ENCODE measurements at regions of chr22 and their contacts with region 1.

Region 1: DNA sequence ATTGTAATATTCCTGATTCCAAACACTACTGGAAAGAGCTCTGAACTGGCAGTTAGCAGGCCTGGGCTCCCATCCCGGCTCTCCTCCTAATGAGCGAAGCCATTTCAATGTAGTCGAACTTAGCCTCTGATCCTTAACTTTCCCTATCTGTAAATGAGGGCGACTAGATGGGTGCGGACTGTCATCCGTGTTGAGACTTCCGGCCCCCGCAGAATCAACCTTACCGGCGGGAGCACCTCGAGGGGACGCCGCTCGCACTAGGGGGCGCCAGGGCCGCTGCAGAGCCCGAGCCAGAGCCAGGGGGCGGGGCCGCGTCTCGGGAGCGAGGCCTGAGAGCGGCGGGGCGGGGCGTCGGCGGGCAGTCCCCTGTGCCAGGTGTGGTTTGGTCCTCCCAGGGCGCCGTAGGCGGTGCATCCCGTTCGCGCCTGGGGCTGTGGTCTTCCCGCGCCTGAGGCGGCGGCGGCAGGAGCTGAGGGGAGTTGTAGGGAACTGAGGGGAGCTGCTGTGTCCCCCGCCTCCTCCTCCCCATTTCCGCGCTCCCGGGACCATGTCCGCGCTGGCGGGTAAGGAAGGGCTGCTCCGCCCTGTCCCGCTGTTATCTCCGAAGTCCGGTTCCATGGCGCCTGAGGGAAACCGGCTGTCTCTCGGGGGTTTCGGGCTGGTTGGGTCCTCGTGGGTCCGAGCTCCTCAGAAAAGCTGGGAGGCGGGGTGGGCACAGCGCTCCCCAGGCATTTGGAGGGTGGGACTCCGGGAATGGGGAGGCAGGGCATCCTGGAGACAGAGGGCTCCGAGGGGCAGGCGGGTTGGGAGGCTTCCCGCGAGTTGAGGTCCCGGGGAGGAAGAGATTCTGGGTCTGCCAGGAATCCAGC is at the start of gene LIMK2:
- DNase-seq: peak; percentile 96
- H3K4me3 ChIP-seq: peak within 1 kb of the TSS; percentile 66 to 94 (median 74)
- H3K27ac ChIP-seq: peak within 1 kb of the TSS; percentile 73 to 85 (median 78)
- H3K4me1 ChIP-seq: peaks cover 0 to 25% (median 17%) of the 10 kb centered on the region in 4 donors
- H3K27me3 ChIP-seq: no peaks in the 10 kb centered on the region
- CTCF ChIP-seq: peak; percentile 61 to 82 (median 73)
- EP300 ChIP-seq: no peak
- POLR2A ChIP-seq: peak; percentile 53 to 83
- total RNA-seq, gene LIMK2: 10.3 to 20.8 (median 14.0) TPM

Region 2: GRCh38 chr22:31160328-31160978 is 51.6 kb before region 1 on chr22:
- intact Hi-C with region 1: loop called (anchors 5 kb)
- DNase-seq: peak; percentile 74
- H3K4me3 ChIP-seq: peak overlapping the region; percentile 76 to 94 (median 86)
- H3K27ac ChIP-seq: peak overlapping the region; percentile 94 to 97 (median 94)
- H3K4me1 ChIP-seq: peaks cover 0 to 41% (median 35%) of the 10 kb centered on the region in 4 donors
- H3K27me3 ChIP-seq: no peaks in the 10 kb centered on the region
- CTCF ChIP-seq: no peak
- EP300 ChIP-seq: no peak
- POLR2A ChIP-seq: no peak

Region 3: DNA sequence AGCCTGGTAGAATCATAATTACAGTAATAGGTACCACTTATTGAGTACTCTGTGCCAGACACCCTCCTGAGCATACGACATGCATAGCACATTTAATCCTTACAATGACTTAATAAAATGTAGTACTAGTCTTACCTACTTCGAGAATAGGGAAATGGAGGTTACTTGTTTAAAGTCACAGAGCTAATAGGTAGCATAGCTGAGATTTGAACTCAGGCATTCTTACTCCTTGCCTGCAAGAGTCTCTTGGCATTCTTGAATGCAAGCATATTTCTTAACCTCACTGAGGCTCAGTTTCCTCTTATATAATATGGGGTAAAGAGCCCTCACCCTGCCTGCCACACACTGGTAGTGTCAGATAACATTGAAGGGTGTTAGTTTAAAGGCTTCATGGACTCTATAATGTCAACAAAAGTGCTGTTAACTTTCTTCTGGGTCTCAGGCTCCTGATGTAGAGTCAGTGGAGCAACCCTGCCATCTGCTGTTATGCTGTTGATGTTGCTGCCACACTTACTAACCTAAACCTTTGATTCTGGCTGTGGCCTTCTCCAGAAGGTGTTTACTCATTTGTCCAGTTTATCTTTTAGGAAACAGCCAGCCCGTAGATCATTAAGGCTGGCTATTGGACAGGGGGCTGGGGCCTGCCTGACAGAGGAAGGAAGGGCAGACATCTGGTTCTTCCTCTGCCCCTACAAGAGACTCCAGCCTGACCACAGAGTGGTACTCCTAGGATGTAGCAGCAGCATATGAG is 18.9 kb after region 1 on chr22:
- intact Hi-C with region 1: loop called (anchors 1 kb)
- DNase-seq: no peak
- H3K4me3 ChIP-seq: no peak overlapping the region
- H3K27ac ChIP-seq: peak overlapping the region; percentile 33 to 76 (median 72)
- H3K4me1 ChIP-seq: peaks cover 0 to 55% (median 39%) of the 10 kb centered on the region in 4 donors
- H3K27me3 ChIP-seq: no peaks in the 10 kb centered on the region
- CTCF ChIP-seq: peak; percentile 48 to 70 (median 66)
- EP300 ChIP-seq: no peak
- POLR2A ChIP-seq: no peak

Region 4: GRCh38 chr22:31272522-31273446 is 60.7 kb after region 1 on chr22:
- intact Hi-C with region 1: loop called (anchors 5 kb)
- DNase-seq: peak; percentile 74
- H3K4me3 ChIP-seq: no peak overlapping the region
- H3K27ac ChIP-seq: peak overlapping the region in 2 of 4 donors; percentile 39 to 49
- H3K4me1 ChIP-seq: peaks cover 0 to 5% (median 0%) of the 10 kb centered on the region in 4 donors
- H3K27me3 ChIP-seq: no peaks in the 10 kb centered on the region
- CTCF ChIP-seq: peak in 3 of 4 experiments; percentile 58 to 79 (median 64)
- EP300 ChIP-seq: no peak
- POLR2A ChIP-seq: no peak

Region 5: GRCh38 chr22:31313366-31314147 is 101.5 kb after region 1 on chr22:
- intact Hi-C with region 1: loop called (anchors 2 kb)
- DNase-seq: peak; percentile 88
- H3K4me3 ChIP-seq: no peak overlapping the region
- H3K27ac ChIP-seq: peak overlapping the region in 2 of 4 donors; percentile 51 to 63
- H3K4me1 ChIP-seq: peaks cover 0 to 10% (median 6%) of the 10 kb centered on the region in 4 donors
- H3K27me3 ChIP-seq: no peaks in the 10 kb centered on the region
- CTCF ChIP-seq: peak; percentile 56 to 86 (median 82)
- EP300 ChIP-seq: no peak
- POLR2A ChIP-seq: no peak

Measured in sigmoid colon (tissue), 7 donors.